Endothelial cell of umbilical vein (primary cell): ENCODE measurements at regions of chr7 and their contacts with region 1.

Region 1: GRCh38 chr7:95871078-95871782 is 98.9 kb downstream of the DYNC1I1 start:
- DNase-seq: peak; percentile 72
- H3K4me3 ChIP-seq: no peak overlapping the region
- H3K27ac ChIP-seq: no peak overlapping the region
- H3K4me1 ChIP-seq: peaks cover 29% of the 10 kb centered on the region
- H3K27me3 ChIP-seq: no peaks in the 10 kb centered on the region
- CTCF ChIP-seq: peak; percentile 49 to 66
- POLR2A ChIP-seq: no peak

Region 2: DNA sequence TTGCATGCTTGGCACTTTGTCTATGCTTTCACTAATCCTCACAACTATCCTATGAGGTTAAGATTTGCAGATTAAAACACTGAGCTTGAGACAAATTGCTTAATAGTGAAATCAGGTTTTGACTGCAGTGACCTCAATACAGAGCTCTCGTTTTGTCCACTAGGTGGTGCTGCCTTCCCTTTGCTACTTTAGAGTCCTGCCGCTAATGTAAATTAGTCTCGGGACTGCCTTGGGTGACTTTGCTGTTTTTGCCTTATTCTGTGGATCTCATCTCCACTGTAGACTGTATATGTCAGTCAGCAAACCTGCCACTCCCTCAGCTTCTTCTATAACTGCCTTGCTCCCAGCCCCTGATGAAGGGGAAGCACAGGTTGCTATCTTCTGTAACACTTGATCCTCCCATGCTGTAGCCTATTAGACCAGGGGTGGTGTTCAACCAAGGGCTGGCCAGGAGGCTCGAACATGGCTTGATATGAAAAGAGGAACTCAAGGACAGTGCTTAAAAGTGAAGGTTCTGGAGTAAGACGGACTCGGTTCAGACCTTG is 359.4 kb before region 1 on chr7:
- CTCF ChIA-PET with region 1: interaction called, 21 read pairs
- POLR2A ChIA-PET with region 1: no interaction called
- dilution Hi-C with region 1: no loop called
- intact Hi-C with region 1: no loop called
- DNase-seq: peak; percentile 65
- H3K4me3 ChIP-seq: no peak overlapping the region
- H3K27ac ChIP-seq: no peak overlapping the region
- H3K4me1 ChIP-seq: no peaks in the 10 kb centered on the region
- H3K27me3 ChIP-seq: peaks cover 12% of the 10 kb centered on the region in 2 experiments
- CTCF ChIP-seq: peak; percentile 72 to 84
- POLR2A ChIP-seq: no peak

Region 3: GRCh38 chr7:95690367-95690947 is 180.8 kb before region 1 on chr7:
- CTCF ChIA-PET with region 1: interaction called, 21 read pairs
- POLR2A ChIA-PET with region 1: no interaction called
- dilution Hi-C with region 1: no loop called
- intact Hi-C with region 1: loop called (anchors 1 kb)
- DNase-seq: peak; percentile 59
- H3K4me3 ChIP-seq: no peak overlapping the region
- H3K27ac ChIP-seq: no peak overlapping the region
- H3K4me1 ChIP-seq: no peaks in the 10 kb centered on the region
- H3K27me3 ChIP-seq: peaks cover 0 to 5% of the 10 kb centered on the region in 2 experiments
- CTCF ChIP-seq: peak; percentile 37 to 42
- POLR2A ChIP-seq: no peak

Region 4: GRCh38 chr7:95840953-95841950 is 30.0 kb before region 1 on chr7:
- CTCF ChIA-PET with region 1: interaction called, 27 read pairs
- POLR2A ChIA-PET with region 1: no interaction called
- dilution Hi-C with region 1: no loop called
- intact Hi-C with region 1: no loop called
- DNase-seq: no peak
- H3K4me3 ChIP-seq: no peak overlapping the region
- H3K27ac ChIP-seq: no peak overlapping the region
- H3K4me1 ChIP-seq: no peaks in the 10 kb centered on the region
- H3K27me3 ChIP-seq: no peaks in the 10 kb centered on the region
- CTCF ChIP-seq: peak; percentile 19 to 31
- POLR2A ChIP-seq: no peak

Region 5: DNA sequence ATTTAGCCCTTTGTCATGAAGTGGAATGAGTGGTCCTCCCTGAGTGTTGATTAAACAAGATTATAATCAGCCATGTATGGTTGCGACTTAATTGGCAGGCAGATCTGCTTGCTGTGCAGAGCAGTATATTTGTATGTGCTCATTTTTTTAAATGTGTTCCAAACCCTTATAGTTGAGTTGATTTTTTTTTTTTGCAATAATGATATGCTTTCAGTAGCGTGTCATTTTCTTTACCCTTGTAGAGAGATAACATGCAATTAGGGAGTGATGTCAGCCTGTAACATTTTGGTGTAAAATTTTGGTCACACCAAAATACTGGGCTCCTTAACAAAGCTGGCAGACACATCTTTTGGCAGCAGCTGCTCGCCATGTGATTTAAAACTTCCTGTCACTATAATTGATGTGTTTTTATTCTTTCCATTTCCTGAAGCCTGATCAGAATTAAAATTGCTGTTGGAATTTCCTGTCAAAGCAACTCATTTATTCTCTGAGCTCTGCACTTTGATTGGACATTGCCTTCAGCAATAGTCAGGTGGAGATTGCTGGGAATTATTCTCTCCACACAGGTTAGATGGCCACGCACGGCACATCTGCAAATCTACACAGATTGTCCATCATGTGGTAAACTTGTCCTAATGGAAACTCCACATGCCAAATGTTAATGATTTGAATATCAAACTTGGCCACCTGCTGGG is 26.5 kb after region 1 on chr7:
- CTCF ChIA-PET with region 1: interaction called, 12 read pairs
- POLR2A ChIA-PET with region 1: no interaction called
- dilution Hi-C with region 1: no loop called
- intact Hi-C with region 1: loop called (anchors 1 kb)
- DNase-seq: peak; percentile 87
- H3K4me3 ChIP-seq: no peak overlapping the region
- H3K27ac ChIP-seq: no peak overlapping the region
- H3K4me1 ChIP-seq: peaks cover 17% of the 10 kb centered on the region
- H3K27me3 ChIP-seq: peaks cover 2 to 7% of the 10 kb centered on the region in 2 experiments
- CTCF ChIP-seq: no peak
- POLR2A ChIP-seq: no peak

Region 6: DNA sequence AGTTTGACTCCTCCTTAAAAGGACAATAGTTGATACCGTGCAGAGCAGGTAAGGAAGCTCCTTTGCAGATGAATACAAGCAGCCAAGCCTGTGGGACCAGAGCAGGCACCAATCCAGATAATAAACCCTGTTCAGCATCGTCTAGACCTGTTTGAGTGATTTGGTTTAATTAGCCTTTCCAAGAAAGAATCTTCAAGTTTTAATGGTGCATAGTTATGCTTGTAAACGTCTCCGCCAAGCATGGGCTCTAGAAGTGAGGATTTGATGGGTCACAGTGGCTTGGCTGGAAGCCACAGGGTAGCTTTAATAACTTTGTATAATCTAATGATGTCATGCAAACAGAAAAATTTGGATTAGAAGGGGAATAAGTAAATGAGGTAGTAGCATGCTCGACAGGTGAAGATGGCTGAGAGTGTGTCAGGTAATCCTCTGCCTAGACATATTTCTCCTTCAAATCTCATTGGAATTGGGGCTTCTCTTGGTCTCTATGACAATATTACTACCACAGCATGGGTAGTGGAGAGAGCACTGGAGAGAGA is 89.5 kb after region 1 on chr7:
- CTCF ChIA-PET with region 1: no interaction called
- POLR2A ChIA-PET with region 1: no interaction called
- dilution Hi-C with region 1: no loop called
- intact Hi-C with region 1: no loop called
- DNase-seq: no peak
- H3K4me3 ChIP-seq: no peak overlapping the region
- H3K27ac ChIP-seq: no peak overlapping the region
- H3K4me1 ChIP-seq: no peaks in the 10 kb centered on the region
- H3K27me3 ChIP-seq: peaks cover 0 to 8% of the 10 kb centered on the region in 2 experiments
- CTCF ChIP-seq: no peak
- POLR2A ChIP-seq: no peak